ENCODE measurements at regions of chr20 and their contacts with region 1.

Region 1: GRCh38 chr20:43914311-43915210 is at the start of gene TOX2:
- DNase-seq: peak; percentile 43 to 68
- ATAC-seq: peak; percentile 49 to 69 (median 68)
- H3K4me3 ChIP-seq: peak within 1 kb of the TSS; percentile 36
- H3K4me3 Mint-ChIP-seq: peak within 1 kb of the TSS; percentile 89
- H3K27ac ChIP-seq: no peak within 1 kb of the TSS
- H3K27ac Mint-ChIP-seq: peak within 1 kb of the TSS; percentile 63 to 86
- H3K4me1 ChIP-seq: peaks cover 25% of the 10 kb centered on the region
- H3K4me1 Mint-ChIP-seq: peaks cover 14 to 22% of the 10 kb centered on the region in 2 donors
- H3K27me3 ChIP-seq: peaks cover 25% of the 10 kb centered on the region
- H3K27me3 Mint-ChIP-seq: peaks cover 57 to 72% of the 10 kb centered on the region in 2 donors
- CTCF ChIP-seq: no peak
- total RNA-seq, gene TOX2: 0.93 to 1.8 (median 1.2) TPM

Region 2: GRCh38 chr20:43849496-43850197 is 64.9 kb before region 1 on chr20:
- intact Hi-C with region 1: loop called (anchors 10 kb)
- DNase-seq: no peak
- ATAC-seq: no peak
- H3K4me3 ChIP-seq: no peak overlapping the region
- H3K4me3 Mint-ChIP-seq: no peak overlapping the region
- H3K27ac ChIP-seq: no peak overlapping the region
- H3K27ac Mint-ChIP-seq: no peak overlapping the region
- H3K4me1 ChIP-seq: peaks cover 4% of the 10 kb centered on the region
- H3K4me1 Mint-ChIP-seq: peaks cover 11 to 16% of the 10 kb centered on the region in 2 donors
- H3K27me3 ChIP-seq: no peaks in the 10 kb centered on the region
- H3K27me3 Mint-ChIP-seq: peaks cover 21 to 29% of the 10 kb centered on the region in 2 donors
- CTCF ChIP-seq: no peak

Region 3: DNA sequence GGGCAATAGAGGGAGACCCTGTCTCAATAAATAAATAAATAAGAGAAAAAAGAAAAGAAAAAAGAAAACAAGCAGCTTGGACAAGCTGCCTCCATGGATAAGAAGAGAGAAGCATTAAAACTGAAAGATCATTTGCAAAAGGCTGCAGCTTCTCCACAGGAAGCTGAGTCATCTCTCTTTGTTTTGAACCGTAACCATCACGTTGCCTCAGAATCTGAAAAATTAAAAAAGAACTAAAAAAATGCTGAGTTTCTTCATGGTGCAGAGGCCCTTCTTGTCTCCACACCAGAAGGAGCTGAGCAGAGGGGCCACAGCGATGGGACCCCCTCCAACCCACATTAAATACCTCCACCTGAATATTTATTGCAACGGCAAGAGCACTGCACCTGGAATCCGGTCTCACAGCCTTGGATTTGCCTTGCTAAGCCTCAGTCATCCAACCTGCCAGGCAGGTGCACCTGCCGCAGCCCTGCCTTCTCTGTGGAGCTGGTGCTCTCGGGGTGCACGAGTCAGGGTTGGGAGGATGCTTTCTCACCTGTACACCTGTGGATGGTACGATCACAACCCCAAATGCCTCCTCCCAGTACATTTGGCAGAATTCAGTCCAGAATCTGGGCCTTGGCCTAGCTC is 28.2 kb after region 1 on chr20:
- intact Hi-C with region 1: no loop called
- DNase-seq: peak in 1 of 2 donors; percentile 63
- ATAC-seq: peak; percentile 71 to 82 (median 76)
- H3K4me3 ChIP-seq: no peak overlapping the region
- H3K4me3 Mint-ChIP-seq: peak overlapping the region; percentile 64
- H3K27ac ChIP-seq: no peak overlapping the region
- H3K27ac Mint-ChIP-seq: peak overlapping the region in 1 of 2 donors; percentile 75
- H3K4me1 ChIP-seq: peaks cover 40% of the 10 kb centered on the region
- H3K4me1 Mint-ChIP-seq: peaks cover 45 to 72% of the 10 kb centered on the region in 2 donors
- H3K27me3 ChIP-seq: peaks cover 33% of the 10 kb centered on the region
- H3K27me3 Mint-ChIP-seq: peaks cover 56 to 81% of the 10 kb centered on the region in 2 donors
- CTCF ChIP-seq: no peak